ENCODE measurements at regions of chr3 and their contacts with region 1.

Region 1: GRCh38 chr3:188348435-188349244 is 194.7 kb downstream of the LPP start:
- DNase-seq: peak; percentile 77 to 81
- ATAC-seq: peak in 3 of 4 donors; percentile 32 to 61 (median 47)
- H3K4me3 ChIP-seq: no peak overlapping the region
- H3K27ac ChIP-seq: peak overlapping the region; percentile 72
- H3K4me1 ChIP-seq: peaks cover 51% of the 10 kb centered on the region
- H3K27me3 ChIP-seq: no peaks in the 10 kb centered on the region
- CTCF ChIP-seq: no peak

Region 2: GRCh38 chr3:187968883-187969580 is 379.6 kb before region 1 on chr3:
- intact Hi-C with region 1: loop called in 1 of 2 experiments (anchors 10 kb)
- DNase-seq: no peak
- ATAC-seq: peak in 2 of 4 donors; percentile 22 to 26
- H3K4me3 ChIP-seq: no peak overlapping the region
- H3K27ac ChIP-seq: no peak overlapping the region
- H3K4me1 ChIP-seq: peaks cover 15% of the 10 kb centered on the region
- H3K27me3 ChIP-seq: no peaks in the 10 kb centered on the region
- CTCF ChIP-seq: no peak

Measured in psoas muscle (tissue), 8 donors.